H1 (cell line): ENCODE measurements at regions of chr1 and their contacts with region 1.

Region 1: GRCh38 chr1:204417231-204417997 is 5.8 kb upstream of the PPP1R15B start:
- DNase-seq: peak in 1 of 2 experiments; percentile 47
- H3K4me3 ChIP-seq: no peak overlapping the region
- H3K27ac ChIP-seq: no peak overlapping the region
- H3K4me1 ChIP-seq: peaks cover 2 to 13% (median 8%) of the 10 kb centered on the region in 4 experiments; a peak in 5 of 7 replicates
- H3K27me3 ChIP-seq: no peaks in the 10 kb centered on the region
- CTCF ChIP-seq: no peak
- EP300 ChIP-seq: no peak
- POLR2A ChIP-seq: no peak
- RAD21 ChIP-seq: no peak

Region 2: DNA sequence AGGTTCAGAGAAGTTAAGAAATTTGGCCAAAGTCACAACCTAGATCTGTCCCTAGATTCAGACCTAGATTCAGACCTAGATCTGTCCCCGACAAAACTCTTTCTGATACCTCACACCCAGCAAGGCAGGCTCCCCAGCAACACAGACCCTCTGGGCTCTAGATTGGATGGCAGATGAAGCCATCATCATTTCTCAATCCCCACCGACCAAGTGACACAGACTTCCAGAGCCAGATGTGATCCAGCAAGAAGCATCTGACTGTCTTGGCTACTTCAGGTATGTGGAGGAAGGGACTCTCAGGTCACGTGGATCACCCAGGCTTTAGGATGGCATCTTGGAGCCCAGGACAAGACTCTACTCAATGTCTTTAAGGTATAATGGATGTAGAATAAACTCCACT is 45.2 kb before region 1 on chr1:
- CTCF ChIA-PET with region 1: no interaction called
- POLR2A ChIA-PET with region 1: no interaction called
- DNase-seq: no peak
- H3K4me3 ChIP-seq: no peak overlapping the region
- H3K27ac ChIP-seq: no peak overlapping the region
- H3K4me1 ChIP-seq: no peaks in the 10 kb centered on the region; a peak in 1 of 7 replicates
- H3K27me3 ChIP-seq: peaks cover 0 to 20% (median 12%) of the 10 kb centered on the region in 4 experiments; a peak in 6 of 7 replicates
- CTCF ChIP-seq: no peak
- EP300 ChIP-seq: no peak
- POLR2A ChIP-seq: no peak
- RAD21 ChIP-seq: no peak

Region 3: DNA sequence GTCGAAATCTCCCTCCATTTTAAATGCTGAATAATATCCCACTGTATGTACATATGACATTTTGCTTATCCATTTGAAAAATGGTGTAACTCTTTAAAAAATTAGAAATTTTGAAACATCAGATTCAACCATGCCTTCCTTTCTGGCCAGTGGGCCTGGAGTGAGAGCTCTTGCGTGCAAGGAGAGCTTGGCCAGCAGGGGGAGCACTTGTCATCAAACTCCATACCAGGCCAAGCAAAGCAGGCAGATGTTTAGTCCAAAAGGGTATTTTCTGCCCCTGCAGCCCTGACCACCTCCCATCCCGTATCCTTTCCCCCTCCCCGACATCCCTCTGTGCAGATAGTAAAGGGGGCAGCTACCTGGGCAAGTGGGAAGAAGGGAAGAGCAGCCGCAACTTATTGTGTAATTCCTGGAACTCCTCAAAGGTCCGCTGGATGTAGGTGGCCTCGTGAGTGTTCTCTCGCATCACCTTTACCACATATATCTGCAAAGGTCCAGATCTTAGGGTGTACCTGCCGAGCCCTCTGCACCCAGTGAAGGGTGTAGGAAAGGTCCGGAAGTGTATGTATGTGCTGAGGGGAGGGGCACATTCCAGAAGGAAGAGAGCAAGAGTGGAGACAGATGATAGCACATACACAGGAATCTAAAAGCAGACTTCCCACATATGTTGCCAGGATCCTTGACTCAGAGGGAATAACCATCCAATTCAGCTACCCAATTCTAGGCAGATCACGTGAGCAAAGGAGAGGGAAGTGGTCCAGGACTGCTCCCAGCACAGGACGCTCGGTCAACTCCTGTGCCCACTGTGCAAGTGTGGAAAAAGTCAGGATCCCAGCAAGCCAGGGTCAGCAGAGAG is 14.1 kb after region 1 on chr1:
- CTCF ChIA-PET with region 1: interaction called, 54 read pairs
- POLR2A ChIA-PET with region 1: no interaction called
- DNase-seq: peak; percentile 62 to 96
- H3K4me3 ChIP-seq: no peak overlapping the region
- H3K27ac ChIP-seq: no peak overlapping the region
- H3K4me1 ChIP-seq: 0 out of 7 replicates have a peak, but pooled peaks cover 0 to 2% (median 0%) of the 10 kb centered on the region in 4 experiments
- H3K27me3 ChIP-seq: no peaks in the 10 kb centered on the region
- CTCF ChIP-seq: peak; percentile 84 to 95 (median 91)
- EP300 ChIP-seq: no peak
- POLR2A ChIP-seq: no peak
- RAD21 ChIP-seq: peak; percentile 61 to 68